Dendritic cell treated with granulocyte-macrophage colony-stimulating factor and Interleukin-4, amounts not matched to agents 40 ng/mL and 50 ng/mL, for 4 days (primary cell): ENCODE measurements at regions of chr3 and their contacts with region 1.

Region 1: GRCh38 chr3:42652611-42653302 is 740 bp upstream of the ZBTB47 start:
- H3K4me3 Mint-ChIP-seq: peak overlapping the region; percentile 89
- H3K27ac Mint-ChIP-seq: peak overlapping the region; percentile 90
- H3K4me1 Mint-ChIP-seq: peaks cover 81% of the 10 kb centered on the region
- H3K27me3 Mint-ChIP-seq: no peaks in the 10 kb centered on the region

Region 2: DNA sequence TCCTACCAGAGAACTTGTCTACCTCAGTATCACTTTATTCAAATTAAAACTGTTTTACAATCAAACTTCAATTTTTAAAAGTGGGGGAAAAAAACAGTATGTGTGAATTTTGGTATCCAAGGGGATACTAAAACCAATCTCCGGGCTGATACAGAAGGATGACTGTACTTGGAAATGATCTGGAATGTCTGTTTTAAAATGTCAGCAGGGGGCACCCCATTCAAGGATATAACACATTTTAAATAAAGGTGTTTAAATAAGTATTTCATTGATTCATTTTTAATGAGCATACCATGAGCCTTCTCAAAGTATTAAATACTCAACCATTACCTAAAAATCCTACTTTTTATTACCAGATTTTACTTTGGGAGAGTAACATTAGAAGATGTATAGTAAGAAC is 758.8 kb before region 1 on chr3:
- intact Hi-C with region 1: no loop called
- H3K4me3 Mint-ChIP-seq: no peak overlapping the region
- H3K27ac Mint-ChIP-seq: no peak overlapping the region
- H3K4me1 Mint-ChIP-seq: no peaks in the 10 kb centered on the region
- H3K27me3 Mint-ChIP-seq: no peaks in the 10 kb centered on the region

Region 3: DNA sequence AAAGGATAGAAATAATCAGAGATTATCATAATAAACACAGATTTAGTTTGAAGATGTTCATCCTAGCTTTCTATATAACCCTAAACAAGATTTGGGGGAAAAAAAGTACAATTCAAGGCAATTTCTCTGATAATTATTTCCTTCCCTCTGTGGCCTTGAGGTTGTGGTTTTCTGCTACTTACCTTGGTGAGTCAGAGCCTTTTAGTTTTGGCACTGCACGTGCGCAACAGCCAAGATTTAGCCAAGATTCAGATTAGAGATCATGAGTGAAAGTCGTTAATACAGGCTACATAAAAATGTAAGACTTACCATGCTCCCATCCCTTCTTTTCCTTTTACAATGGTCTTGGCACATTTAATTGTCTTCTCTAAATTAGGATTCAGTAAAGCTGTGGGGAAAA is 249.0 kb before region 1 on chr3:
- intact Hi-C with region 1: no loop called
- H3K4me3 Mint-ChIP-seq: no peak overlapping the region
- H3K27ac Mint-ChIP-seq: no peak overlapping the region
- H3K4me1 Mint-ChIP-seq: no peaks in the 10 kb centered on the region
- H3K27me3 Mint-ChIP-seq: peaks cover 4% of the 10 kb centered on the region

Region 4: GRCh38 chr3:42539869-42540714 is 112.7 kb before region 1 on chr3:
- intact Hi-C with region 1: no loop called
- H3K4me3 Mint-ChIP-seq: no peak overlapping the region
- H3K27ac Mint-ChIP-seq: no peak overlapping the region
- H3K4me1 Mint-ChIP-seq: peaks cover 7% of the 10 kb centered on the region
- H3K27me3 Mint-ChIP-seq: peaks cover 5% of the 10 kb centered on the region

Region 5: DNA sequence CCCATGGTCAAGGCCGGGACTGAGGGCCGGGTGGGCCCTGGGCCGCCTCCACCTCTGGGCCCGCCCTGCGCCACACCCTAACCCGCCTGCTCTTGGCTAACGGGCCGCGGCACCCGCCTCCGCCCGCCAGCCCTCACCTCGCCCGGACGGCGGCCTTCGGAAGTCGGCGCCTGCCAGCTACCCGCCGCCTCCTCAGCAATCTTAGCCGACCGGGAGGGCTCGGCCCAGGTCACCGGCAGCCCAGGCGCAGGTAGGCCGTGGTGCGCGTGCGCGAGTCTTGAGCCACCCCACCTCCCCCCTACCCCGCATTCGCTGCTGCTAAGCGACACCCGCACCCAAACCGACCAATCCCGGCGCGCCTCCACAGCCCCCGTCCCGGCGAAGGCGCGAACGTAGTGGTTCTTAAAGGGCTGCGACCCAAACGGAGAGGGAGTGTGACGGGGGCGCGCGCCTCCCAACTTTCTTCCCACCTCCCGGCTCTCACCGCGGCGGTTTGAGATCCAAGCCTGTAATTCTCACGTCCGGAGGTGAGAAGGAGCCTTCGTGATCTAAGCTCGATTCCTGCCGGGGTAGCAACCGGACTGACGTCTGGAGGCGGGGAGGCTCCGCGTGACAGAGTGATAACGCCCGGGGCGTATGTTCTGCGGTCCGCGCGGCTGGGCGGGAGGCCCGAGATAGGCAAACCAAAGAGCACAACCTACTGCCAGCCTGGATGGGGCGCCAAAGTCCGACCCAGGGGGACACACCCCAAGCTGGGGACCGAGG is 70.9 kb before region 1 on chr3 and contains the start of gene SEC22C:
- intact Hi-C with region 1: loop called (anchors 5 kb)
- H3K4me3 Mint-ChIP-seq: peak within 1 kb of the TSS; percentile 86
- H3K27ac Mint-ChIP-seq: peak within 1 kb of the TSS; percentile 92
- H3K4me1 Mint-ChIP-seq: peaks cover 32% of the 10 kb centered on the region
- H3K27me3 Mint-ChIP-seq: no peaks in the 10 kb centered on the region

Region 6: GRCh38 chr3:42600111-42600988 is 52.4 kb before region 1 on chr3 and contains the start of gene NKTR:
- intact Hi-C with region 1: loop called (anchors 2 kb)
- H3K4me3 Mint-ChIP-seq: peak within 1 kb of the TSS; percentile 89
- H3K27ac Mint-ChIP-seq: peak within 1 kb of the TSS; percentile 99
- H3K4me1 Mint-ChIP-seq: peaks cover 22% of the 10 kb centered on the region
- H3K27me3 Mint-ChIP-seq: no peaks in the 10 kb centered on the region

Region 7: GRCh38 chr3:42749753-42750231 is 97.0 kb after region 1 on chr3:
- intact Hi-C with region 1: loop called (anchors 5 kb)
- H3K4me3 Mint-ChIP-seq: no peak overlapping the region
- H3K27ac Mint-ChIP-seq: peak overlapping the region; percentile 5
- H3K4me1 Mint-ChIP-seq: peaks cover 38% of the 10 kb centered on the region
- H3K27me3 Mint-ChIP-seq: no peaks in the 10 kb centered on the region

Region 8: DNA sequence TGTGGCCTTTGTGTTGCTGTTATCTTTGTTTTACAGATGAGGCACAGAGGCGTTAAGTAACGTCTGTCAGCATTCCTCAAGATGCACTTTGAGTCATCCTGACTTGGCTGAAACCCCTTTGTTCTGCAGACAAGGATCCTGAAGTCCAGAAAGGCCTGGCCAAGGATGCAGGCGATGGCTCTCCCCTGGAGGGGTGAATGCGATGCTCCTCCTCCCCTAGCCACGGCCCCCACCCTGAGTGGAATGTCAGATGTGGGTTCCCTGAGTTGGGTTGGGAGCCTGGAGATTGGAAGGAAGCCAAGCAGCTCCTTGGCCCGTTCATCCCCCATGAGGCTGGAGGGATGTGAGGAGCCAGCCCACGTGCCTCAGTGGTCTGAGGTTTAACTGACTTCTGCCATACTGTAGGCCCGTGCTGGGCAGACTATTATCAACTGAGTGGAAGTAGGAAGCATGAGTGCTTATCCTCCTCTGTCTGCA is 409.8 kb after region 1 on chr3:
- intact Hi-C with region 1: no loop called
- H3K4me3 Mint-ChIP-seq: no peak overlapping the region
- H3K27ac Mint-ChIP-seq: no peak overlapping the region
- H3K4me1 Mint-ChIP-seq: no peaks in the 10 kb centered on the region
- H3K27me3 Mint-ChIP-seq: no peaks in the 10 kb centered on the region